B cell (primary cell): ENCODE measurements at regions of chr12 and their contacts with region 1.

Region 1: GRCh38 chr12:116236148-116236731 is 41.3 kb downstream of the MED13L start:
- DNase-seq: peak; percentile 72
- ATAC-seq: peak; percentile 66
- H3K4me3 ChIP-seq: no peak overlapping the region
- H3K4me3 Mint-ChIP-seq: no peak overlapping the region
- H3K27ac ChIP-seq: peak overlapping the region in 1 of 2 donors; percentile 60
- H3K27ac Mint-ChIP-seq: peak overlapping the region; percentile 43
- H3K4me1 ChIP-seq: peaks cover 4 to 12% of the 10 kb centered on the region in 2 donors
- H3K4me1 Mint-ChIP-seq: peaks cover 38% of the 10 kb centered on the region
- H3K27me3 ChIP-seq: no peaks in the 10 kb centered on the region
- H3K27me3 Mint-ChIP-seq: no peaks in the 10 kb centered on the region
- CTCF ChIP-seq: peak; percentile 77

Region 2: DNA sequence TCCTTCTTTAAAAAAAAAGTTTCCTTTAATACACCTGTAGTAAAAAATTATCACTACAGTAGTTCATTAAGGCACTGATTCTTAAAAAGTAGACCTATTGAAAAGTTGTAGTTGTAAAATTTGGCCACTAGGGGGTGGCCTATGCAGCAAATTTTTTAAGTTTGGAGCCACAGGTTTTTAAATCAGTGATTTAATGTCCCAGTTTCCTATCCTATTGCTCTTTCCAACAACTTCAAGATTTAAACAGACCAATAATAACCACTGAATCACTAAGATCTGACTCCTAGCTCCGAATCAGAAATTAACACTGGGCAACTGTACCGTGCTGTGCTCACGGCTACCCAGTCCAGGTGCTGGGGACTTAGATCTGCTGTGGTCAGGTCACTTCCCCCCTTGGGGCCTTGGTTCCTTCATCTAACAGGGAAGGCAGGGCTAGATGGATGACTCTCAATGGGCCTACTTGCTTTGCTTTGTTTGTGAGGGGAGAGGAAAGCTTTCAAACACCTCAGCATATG is 238.1 kb before region 1 on chr12:
- CTCF ChIA-PET with region 1: interaction called, 11 read pairs
- POLR2A ChIA-PET with region 1: no interaction called
- intact Hi-C with region 1: loop called (anchors 1 kb)
- DNase-seq: peak; percentile 72
- ATAC-seq: peak; percentile 85
- H3K4me3 ChIP-seq: no peak overlapping the region
- H3K4me3 Mint-ChIP-seq: no peak overlapping the region
- H3K27ac ChIP-seq: peak overlapping the region in 1 of 2 donors; percentile 58
- H3K27ac Mint-ChIP-seq: peak overlapping the region; percentile 1
- H3K4me1 ChIP-seq: peaks cover 6 to 7% of the 10 kb centered on the region in 2 donors
- H3K4me1 Mint-ChIP-seq: peaks cover 6% of the 10 kb centered on the region
- H3K27me3 ChIP-seq: no peaks in the 10 kb centered on the region
- H3K27me3 Mint-ChIP-seq: no peaks in the 10 kb centered on the region
- CTCF ChIP-seq: peak; percentile 97

Region 3: GRCh38 chr12:116060764-116061163 is 175.5 kb before region 1 on chr12:
- CTCF ChIA-PET with region 1: interaction called, 15 read pairs
- POLR2A ChIA-PET with region 1: no interaction called
- intact Hi-C with region 1: no loop called
- DNase-seq: peak; percentile 76
- ATAC-seq: peak; percentile 84
- H3K4me3 ChIP-seq: peak overlapping the region in 4 of 5 experiments; percentile 15 to 67 (median 38)
- H3K4me3 Mint-ChIP-seq: peak overlapping the region; percentile 84
- H3K27ac ChIP-seq: peak overlapping the region; percentile 48 to 73
- H3K27ac Mint-ChIP-seq: peak overlapping the region; percentile 81
- H3K4me1 ChIP-seq: peaks cover 11 to 12% of the 10 kb centered on the region in 2 donors
- H3K4me1 Mint-ChIP-seq: peaks cover 46% of the 10 kb centered on the region
- H3K27me3 ChIP-seq: no peaks in the 10 kb centered on the region
- H3K27me3 Mint-ChIP-seq: no peaks in the 10 kb centered on the region
- CTCF ChIP-seq: no peak

Region 4: DNA sequence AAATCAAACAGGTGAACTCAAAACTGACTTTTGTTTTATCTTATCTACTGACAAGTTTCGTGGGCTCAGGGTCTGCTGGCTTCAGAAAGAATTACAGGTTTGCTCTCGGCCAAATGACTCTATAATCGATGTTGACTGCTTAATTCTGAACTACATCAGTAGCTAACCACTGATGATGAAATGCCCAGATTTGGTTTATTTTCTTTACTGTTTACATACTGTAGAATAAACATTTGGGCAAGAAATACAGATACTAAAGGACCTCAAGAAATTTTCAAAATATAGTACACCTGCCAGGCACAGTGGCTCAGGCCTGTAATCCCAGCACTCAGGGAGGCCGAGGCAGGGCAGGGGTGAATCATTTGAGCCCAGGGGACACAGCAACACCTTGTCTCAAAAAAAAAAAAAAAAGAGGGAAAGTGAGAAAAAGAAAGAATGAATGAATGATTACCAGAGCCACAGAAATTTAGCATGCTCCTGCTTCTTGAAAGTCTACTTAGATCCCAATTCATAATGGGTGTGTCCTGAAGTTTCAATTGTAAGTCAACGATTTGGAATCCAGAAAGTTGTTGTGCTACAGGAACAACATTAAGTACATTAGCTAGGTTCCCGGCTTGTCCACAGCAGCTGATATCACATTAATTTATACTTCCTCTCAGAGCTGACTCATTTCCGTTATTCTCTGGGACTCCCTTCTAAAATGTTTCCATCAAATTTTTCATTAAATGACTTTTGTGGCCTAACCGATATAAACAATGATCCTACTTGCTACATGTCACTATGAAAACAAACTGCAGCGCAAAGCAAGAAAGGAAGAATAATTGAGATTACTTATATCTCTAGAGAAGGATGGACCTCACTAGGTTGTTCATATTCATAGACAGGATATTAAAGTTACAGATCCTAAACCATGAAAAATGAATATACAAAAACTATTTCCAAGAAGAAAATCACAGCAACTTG is 93.0 kb before region 1 on chr12:
- CTCF ChIA-PET with region 1: interaction called, 10 read pairs
- POLR2A ChIA-PET with region 1: no interaction called
- intact Hi-C with region 1: loop called (anchors 5 kb)
- DNase-seq: no peak
- ATAC-seq: peak; percentile 36
- H3K4me3 ChIP-seq: no peak overlapping the region
- H3K4me3 Mint-ChIP-seq: peak overlapping the region; percentile 38
- H3K27ac ChIP-seq: peak overlapping the region in 1 of 2 donors; percentile 41
- H3K27ac Mint-ChIP-seq: peak overlapping the region; percentile 17
- H3K4me1 ChIP-seq: peaks cover 18 to 32% of the 10 kb centered on the region in 2 donors
- H3K4me1 Mint-ChIP-seq: peaks cover 58% of the 10 kb centered on the region
- H3K27me3 ChIP-seq: no peaks in the 10 kb centered on the region
- H3K27me3 Mint-ChIP-seq: no peaks in the 10 kb centered on the region
- CTCF ChIP-seq: no peak

Region 5: GRCh38 chr12:116336542-116337065 is 100.4 kb after region 1 on chr12:
- CTCF ChIA-PET with region 1: interaction called, 10 read pairs
- POLR2A ChIA-PET with region 1: no interaction called
- intact Hi-C with region 1: no loop called
- DNase-seq: peak; percentile 94
- ATAC-seq: peak; percentile 90
- H3K4me3 ChIP-seq: peak overlapping the region in 2 of 5 experiments; percentile 18 to 35
- H3K4me3 Mint-ChIP-seq: peak overlapping the region; percentile 78
- H3K27ac ChIP-seq: peak overlapping the region; percentile 55 to 78
- H3K27ac Mint-ChIP-seq: peak overlapping the region; percentile 89
- H3K4me1 ChIP-seq: peaks cover 56 to 84% of the 10 kb centered on the region in 2 donors
- H3K4me1 Mint-ChIP-seq: peaks cover 70% of the 10 kb centered on the region
- H3K27me3 ChIP-seq: no peaks in the 10 kb centered on the region
- H3K27me3 Mint-ChIP-seq: no peaks in the 10 kb centered on the region
- CTCF ChIP-seq: peak; percentile 15

Region 6: GRCh38 chr12:116346741-116347140 is 110.5 kb after region 1 on chr12:
- CTCF ChIA-PET with region 1: no interaction called
- POLR2A ChIA-PET with region 1: no interaction called
- intact Hi-C with region 1: no loop called
- DNase-seq: no peak
- ATAC-seq: no peak
- H3K4me3 ChIP-seq: no peak overlapping the region
- H3K4me3 Mint-ChIP-seq: no peak overlapping the region
- H3K27ac ChIP-seq: no peak overlapping the region
- H3K27ac Mint-ChIP-seq: no peak overlapping the region
- H3K4me1 ChIP-seq: peaks cover 0 to 3% of the 10 kb centered on the region in 2 donors
- H3K4me1 Mint-ChIP-seq: peaks cover 9% of the 10 kb centered on the region
- H3K27me3 ChIP-seq: no peaks in the 10 kb centered on the region
- H3K27me3 Mint-ChIP-seq: no peaks in the 10 kb centered on the region
- CTCF ChIP-seq: no peak

Region 7: GRCh38 chr12:117629454-117629853 is 1393.2 kb after region 1 on chr12:
- CTCF ChIA-PET with region 1: no interaction called
- POLR2A ChIA-PET with region 1: no interaction called
- intact Hi-C with region 1: no loop called
- DNase-seq: no peak
- ATAC-seq: no peak
- H3K4me3 ChIP-seq: no peak overlapping the region
- H3K4me3 Mint-ChIP-seq: no peak overlapping the region
- H3K27ac ChIP-seq: no peak overlapping the region
- H3K27ac Mint-ChIP-seq: no peak overlapping the region
- H3K4me1 ChIP-seq: no peaks in the 10 kb centered on the region
- H3K4me1 Mint-ChIP-seq: no peaks in the 10 kb centered on the region
- H3K27me3 ChIP-seq: no peaks in the 10 kb centered on the region
- H3K27me3 Mint-ChIP-seq: peaks cover 15% of the 10 kb centered on the region
- CTCF ChIP-seq: no peak